ENCODE measurements at regions of chr1 and their contacts with region 1.

Region 1: GRCh38 chr1:90621986-90622385 is 95.1 kb downstream of the BARHL2 start:
- DNase-seq: no peak
- ATAC-seq: no peak

Region 2: GRCh38 chr1:90650401-90650800 is 28.4 kb after region 1 on chr1:
- intact Hi-C with region 1: loop called in 1 of 2 experiments (anchors 2 kb)
- DNase-seq: no peak
- ATAC-seq: no peak

Measured in left cardiac atrium (tissue), 4 donors.